Activated T-helper 2 cell treated with anti-CD3 and anti-CD28 coated beads, Interferon-gamma antibody, Interleukin-2, Interleukin-4, amounts not matched to agents 10 μg/mL and 5 μg/mL and 100 μg/mL, durations not matched to agents 14 hours and 24 hours and 36 hours (primary cell): ENCODE measurements at regions of chr5 and their contacts with region 1.

Region 1: GRCh38 chr5:34499001-34499734 is 157.0 kb upstream of the RAI14 start:
- DNase-seq: peak; percentile 12
- H3K4me3 Mint-ChIP-seq: no peak overlapping the region
- H3K27ac Mint-ChIP-seq: peak overlapping the region; percentile 44
- H3K4me1 Mint-ChIP-seq: peaks cover 16% of the 10 kb centered on the region
- H3K27me3 Mint-ChIP-seq: peaks cover 4% of the 10 kb centered on the region

Region 2: DNA sequence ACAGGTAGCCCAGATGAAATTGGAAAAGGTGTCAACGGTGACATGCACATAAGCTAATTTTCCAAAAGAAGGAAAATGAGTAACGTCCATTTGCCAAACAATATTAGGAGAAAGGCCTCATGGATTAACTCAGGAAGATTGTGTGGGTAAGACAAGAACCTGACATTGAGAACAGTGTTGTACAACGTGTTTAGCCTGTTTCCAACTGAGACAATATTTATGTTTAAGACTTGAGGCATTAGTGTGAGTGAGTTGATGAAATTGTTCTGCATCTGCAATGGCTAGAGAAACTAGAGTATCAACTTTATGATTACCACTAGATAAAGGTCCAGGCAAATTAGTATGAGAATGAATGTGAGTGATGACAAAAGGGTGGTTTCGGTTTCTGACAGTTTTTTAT is 34.3 kb before region 1 on chr5:
- intact Hi-C with region 1: no loop called
- DNase-seq: no peak
- H3K4me3 Mint-ChIP-seq: no peak overlapping the region
- H3K27ac Mint-ChIP-seq: no peak overlapping the region
- H3K4me1 Mint-ChIP-seq: peaks cover 28% of the 10 kb centered on the region
- H3K27me3 Mint-ChIP-seq: peaks cover 4% of the 10 kb centered on the region

Region 3: GRCh38 chr5:34656001-34656699 is 157.0 kb after region 1 on chr5 and contains the start of gene RAI14:
- intact Hi-C with region 1: loop called (anchors 10 kb)
- DNase-seq: no peak
- H3K4me3 Mint-ChIP-seq: peak within 1 kb of the TSS; percentile 82
- H3K27ac Mint-ChIP-seq: peak within 1 kb of the TSS; percentile 15
- H3K4me1 Mint-ChIP-seq: peaks cover 8% of the 10 kb centered on the region
- H3K27me3 Mint-ChIP-seq: peaks cover 47% of the 10 kb centered on the region
- total RNA-seq, gene RAI14: 4.0 and 4.2 TPM in 2 replicates

Region 4: GRCh38 chr5:34838785-34839714 is 339.9 kb after region 1 on chr5 and contains the start of gene TTC23L:
- intact Hi-C with region 1: loop called (anchors 10 kb)
- DNase-seq: peak; percentile 85
- H3K4me3 Mint-ChIP-seq: peak within 1 kb of the TSS; percentile 88
- H3K27ac Mint-ChIP-seq: peak within 1 kb of the TSS; percentile 65
- H3K4me1 Mint-ChIP-seq: peaks cover 10% of the 10 kb centered on the region
- H3K27me3 Mint-ChIP-seq: peaks cover 13% of the 10 kb centered on the region
- total RNA-seq, gene TTC23L: not detected in 2 replicates